Ovary (tissue), 10 donors: ENCODE measurements at regions of chr9 and their contacts with region 1.

Region 1: GRCh38 chr9:16623989-16624743 is 246.3 kb downstream of the BNC2 start:
- DNase-seq: no peak
- H3K4me3 ChIP-seq: no peak overlapping the region
- H3K27ac ChIP-seq: peak overlapping the region in 1 of 2 donors; percentile 8
- H3K4me1 ChIP-seq: peaks cover 21% of the 10 kb centered on the region
- H3K27me3 ChIP-seq: no peaks in the 10 kb centered on the region
- CTCF ChIP-seq: no peak
- EP300 ChIP-seq: no peak
- POLR2A ChIP-seq: no peak

Region 2: DNA sequence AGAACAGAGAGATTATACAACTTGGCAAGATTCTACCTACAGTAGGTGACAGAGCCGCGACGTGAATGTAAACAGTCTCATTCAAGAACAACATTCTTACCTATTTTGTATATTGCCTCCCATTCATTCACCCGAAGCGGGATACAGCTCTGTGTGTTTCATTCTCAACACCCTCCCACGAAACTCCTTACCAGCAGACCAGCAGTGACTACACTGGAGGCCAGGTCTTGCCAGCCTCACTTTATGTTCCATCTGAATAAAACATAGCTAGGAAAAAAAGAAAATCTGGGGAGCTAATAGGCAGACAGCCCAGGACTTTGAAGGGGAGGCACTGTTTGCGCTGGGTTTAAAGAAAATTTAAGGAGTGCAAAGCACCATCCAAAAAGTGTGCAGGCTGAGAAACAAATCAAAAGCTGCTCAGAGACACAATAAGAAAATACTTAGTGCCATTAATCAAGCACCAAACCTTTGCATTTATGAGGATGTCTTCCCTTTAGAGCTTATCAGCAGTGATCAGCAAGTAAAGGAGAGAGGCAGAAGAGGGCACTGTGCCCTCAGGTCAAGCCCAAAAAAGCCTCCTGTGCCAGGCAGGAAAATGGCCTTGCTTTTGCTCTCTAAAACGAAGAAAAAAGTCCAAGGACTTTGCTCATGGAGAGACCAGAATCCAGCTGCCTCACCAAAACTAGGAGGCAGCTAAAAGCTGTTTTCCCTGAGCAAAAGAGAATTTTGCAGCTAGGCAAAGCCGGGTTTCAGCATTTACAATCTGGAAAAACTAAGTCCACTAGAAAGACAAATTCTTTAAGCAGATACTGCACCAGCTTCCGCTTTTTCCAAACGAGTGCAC is 48.8 kb before region 1 on chr9:
- intact Hi-C with region 1: no loop called
- DNase-seq: no peak
- H3K4me3 ChIP-seq: peak overlapping the region; percentile 11
- H3K27ac ChIP-seq: peak overlapping the region in 1 of 2 donors; percentile 69
- H3K4me1 ChIP-seq: peaks cover 19% of the 10 kb centered on the region
- H3K27me3 ChIP-seq: no peaks in the 10 kb centered on the region
- CTCF ChIP-seq: no peak
- EP300 ChIP-seq: no peak
- POLR2A ChIP-seq: no peak

Region 3: GRCh38 chr9:16608906-16609305 is 15.3 kb before region 1 on chr9:
- intact Hi-C with region 1: loop called in 1 of 4 experiments (anchors 2 kb)
- DNase-seq: no peak
- H3K4me3 ChIP-seq: no peak overlapping the region
- H3K27ac ChIP-seq: no peak overlapping the region
- H3K4me1 ChIP-seq: peaks cover 10% of the 10 kb centered on the region
- H3K27me3 ChIP-seq: no peaks in the 10 kb centered on the region
- CTCF ChIP-seq: no peak
- EP300 ChIP-seq: no peak
- POLR2A ChIP-seq: no peak